Breast epithelium (tissue), 4 donors: ENCODE measurements at regions of chr15 and their contacts with region 1.

Region 1: GRCh38 chr15:87401973-87402372 is 854.6 kb downstream of the NTRK3 start:
- DNase-seq: no peak
- H3K4me3 ChIP-seq: no peak overlapping the region
- H3K27ac ChIP-seq: no peak overlapping the region
- H3K4me1 ChIP-seq: no peaks in the 10 kb centered on the region
- H3K27me3 ChIP-seq: no peaks in the 10 kb centered on the region
- CTCF ChIP-seq: no peak
- POLR2A ChIP-seq: no peak

Region 2: DNA sequence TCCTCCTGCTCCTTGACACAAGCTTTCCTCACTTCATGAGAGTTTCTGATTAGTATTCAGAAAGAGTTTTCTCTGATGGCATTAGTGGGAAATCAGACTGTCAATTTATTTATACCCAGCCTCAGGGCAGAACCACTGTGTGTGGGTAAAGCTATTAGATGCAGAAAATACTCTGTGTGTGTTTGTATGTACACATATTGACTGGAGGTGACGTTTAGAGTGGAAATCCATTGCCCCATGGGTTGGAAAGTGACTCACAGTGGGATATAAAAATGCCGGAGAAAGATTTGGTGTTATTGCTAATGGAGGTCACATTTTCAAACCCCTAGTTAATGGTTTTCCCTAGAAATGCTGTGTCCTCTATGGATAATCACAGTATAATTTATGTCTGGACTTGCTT is 744.7 kb before region 1 on chr15:
- intact Hi-C with region 1: loop called (anchors 5 kb)
- DNase-seq: no peak
- H3K4me3 ChIP-seq: no peak overlapping the region
- H3K27ac ChIP-seq: no peak overlapping the region
- H3K4me1 ChIP-seq: no peaks in the 10 kb centered on the region
- H3K27me3 ChIP-seq: no peaks in the 10 kb centered on the region
- CTCF ChIP-seq: no peak
- POLR2A ChIP-seq: no peak